Right cardiac atrium (tissue), 5 donors: ENCODE measurements at regions of chr7 and their contacts with region 1.

Region 1: DNA sequence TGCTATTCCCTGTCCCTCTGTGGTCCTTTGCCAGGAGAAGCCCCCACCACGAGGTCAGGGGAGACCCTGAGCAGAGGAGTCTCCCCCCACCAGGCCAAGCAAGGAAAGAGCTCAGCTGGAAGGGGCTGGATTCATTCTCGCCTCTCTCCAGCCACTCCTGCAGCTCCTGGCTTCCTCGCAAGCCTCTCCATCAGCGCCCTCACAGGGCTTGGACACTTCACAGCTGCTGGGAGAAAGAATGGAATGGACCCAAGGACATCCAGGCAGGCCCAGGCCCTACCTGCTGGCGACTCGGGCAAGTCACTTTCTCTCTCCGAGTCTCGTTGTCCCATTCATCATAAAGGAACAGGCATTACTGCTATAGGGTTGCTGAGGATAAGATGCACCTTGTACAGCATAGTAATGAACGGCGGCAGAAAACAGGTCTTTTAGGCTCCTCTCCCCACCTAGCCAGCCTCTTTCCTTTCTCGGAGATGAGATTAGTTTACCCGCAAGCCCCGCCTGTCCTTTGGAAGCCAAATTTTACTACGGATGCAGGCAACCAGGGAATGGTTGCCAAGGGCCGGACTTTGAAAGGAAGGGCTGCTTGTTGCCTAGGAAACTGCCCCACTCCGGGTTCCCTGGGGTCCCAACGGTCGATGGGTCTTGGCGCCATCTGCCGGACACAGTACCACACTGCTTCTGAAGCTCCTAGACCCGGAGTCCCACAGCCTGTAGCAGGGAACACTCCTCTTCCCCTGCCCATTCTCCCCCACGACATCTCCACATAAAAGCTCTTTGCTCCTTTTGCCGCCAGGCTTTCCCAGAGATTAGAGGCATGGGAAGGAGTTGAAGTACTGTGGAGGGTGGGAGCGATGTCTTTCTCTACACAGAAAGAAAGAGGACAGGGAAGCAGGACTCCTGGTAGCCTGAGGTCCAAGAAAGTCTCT is 22.3 kb downstream of the IMPDH1 start:
- DNase-seq: peak; percentile 87 to 94 (median 91)
- ATAC-seq: peak; percentile 87 to 91
- H3K4me3 ChIP-seq: no peak overlapping the region
- H3K27ac ChIP-seq: no peak overlapping the region
- H3K4me1 ChIP-seq: no peaks in the 10 kb centered on the region
- H3K27me3 ChIP-seq: no peaks in the 10 kb centered on the region

Region 2: DNA sequence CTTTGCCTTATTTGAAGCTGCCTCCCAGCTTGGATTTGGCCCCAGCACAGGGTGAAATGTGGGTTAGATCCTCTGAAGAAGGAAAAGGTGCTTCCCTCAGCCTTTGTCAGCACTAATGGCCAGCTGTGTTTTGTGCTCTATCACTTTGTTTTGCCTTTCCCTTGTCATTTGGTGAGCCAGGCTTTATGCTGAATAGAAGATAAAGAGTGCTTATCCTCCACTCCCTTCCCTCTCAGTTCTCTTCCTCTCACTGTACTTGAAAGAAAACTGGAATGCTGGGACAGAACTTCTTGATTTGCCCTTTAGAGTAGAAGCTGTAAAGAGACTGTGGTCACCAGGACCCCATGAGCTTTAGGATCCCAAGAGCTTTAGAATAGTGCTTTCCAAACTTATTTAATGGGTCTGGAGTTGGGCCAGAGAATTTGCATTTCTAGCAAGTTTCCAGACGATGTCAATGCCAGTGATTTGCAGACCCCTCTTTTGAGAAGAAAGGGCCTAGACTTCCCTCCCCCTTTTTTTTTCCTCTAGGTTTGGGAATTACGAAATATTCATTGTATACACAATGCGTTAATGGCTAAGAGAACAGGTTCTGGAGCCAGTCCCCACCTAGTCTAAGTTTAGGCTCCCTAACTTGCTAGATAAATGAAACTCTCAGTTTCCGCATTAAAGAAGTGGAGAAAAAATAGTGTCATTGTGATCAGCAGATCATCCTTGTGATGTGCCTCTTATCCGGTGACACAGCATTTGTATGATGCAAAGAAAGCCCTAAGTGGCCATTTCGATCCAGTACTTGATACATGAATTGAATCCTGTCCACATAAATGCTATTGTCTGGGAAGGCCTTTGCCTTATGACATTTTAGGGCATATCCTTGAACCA is 437.5 kb before region 1 on chr7:
- intact Hi-C with region 1: no loop called
- DNase-seq: no peak
- ATAC-seq: no peak
- H3K4me3 ChIP-seq: no peak overlapping the region
- H3K27ac ChIP-seq: no peak overlapping the region
- H3K4me1 ChIP-seq: peaks cover 4% of the 10 kb centered on the region
- H3K27me3 ChIP-seq: no peaks in the 10 kb centered on the region

Region 3: DNA sequence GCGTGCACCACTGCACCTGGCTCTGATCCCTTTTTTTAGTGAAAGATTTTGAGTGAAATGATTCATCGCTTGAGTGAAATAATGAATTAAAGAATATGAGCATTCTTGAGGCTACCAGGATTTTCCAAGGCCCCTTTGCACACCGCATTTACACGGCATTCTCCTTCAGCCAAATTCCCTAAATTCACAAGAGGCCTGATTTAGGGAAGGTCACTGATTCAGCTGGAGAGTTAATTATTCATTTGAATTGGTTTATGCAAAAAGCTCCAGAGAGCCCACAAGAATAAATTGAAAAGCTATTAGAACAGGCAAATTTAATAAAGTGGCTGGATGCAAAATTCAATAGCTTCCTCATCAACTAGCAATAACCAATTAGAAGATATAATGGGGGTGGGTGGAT is 99.9 kb before region 1 on chr7:
- intact Hi-C with region 1: no loop called
- DNase-seq: no peak
- ATAC-seq: no peak
- H3K4me3 ChIP-seq: no peak overlapping the region
- H3K27ac ChIP-seq: no peak overlapping the region
- H3K4me1 ChIP-seq: no peaks in the 10 kb centered on the region
- H3K27me3 ChIP-seq: no peaks in the 10 kb centered on the region

Region 4: DNA sequence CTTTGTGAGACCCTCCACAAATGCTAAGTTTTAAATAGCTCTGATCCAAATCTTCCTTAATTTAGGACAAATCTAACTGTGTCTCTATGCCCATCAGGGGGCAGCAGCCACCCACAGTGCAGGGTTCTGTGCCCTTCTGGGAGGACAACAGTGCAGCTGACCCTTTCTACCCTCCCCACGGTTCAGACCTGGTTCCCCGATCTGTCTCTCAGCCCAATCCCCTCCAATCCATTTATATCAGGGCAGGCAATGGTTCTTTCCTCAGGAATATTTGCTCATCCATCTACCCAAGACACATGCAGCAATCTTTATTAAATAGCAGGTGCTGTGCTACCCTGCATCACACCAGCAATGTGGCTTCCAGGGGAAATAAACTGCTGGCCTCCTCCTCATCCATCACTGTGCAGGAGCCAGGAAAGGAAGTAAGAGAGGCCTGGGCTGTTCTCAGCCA is 39.8 kb before region 1 on chr7:
- intact Hi-C with region 1: loop called (anchors 5 kb)
- DNase-seq: peak; percentile 60 to 79 (median 73)
- ATAC-seq: peak; percentile 36 to 43
- H3K4me3 ChIP-seq: no peak overlapping the region
- H3K27ac ChIP-seq: no peak overlapping the region
- H3K4me1 ChIP-seq: peaks cover 1% of the 10 kb centered on the region
- H3K27me3 ChIP-seq: no peaks in the 10 kb centered on the region